ENCODE measurements at regions of chr1 and their contacts with region 1.

Region 1: DNA sequence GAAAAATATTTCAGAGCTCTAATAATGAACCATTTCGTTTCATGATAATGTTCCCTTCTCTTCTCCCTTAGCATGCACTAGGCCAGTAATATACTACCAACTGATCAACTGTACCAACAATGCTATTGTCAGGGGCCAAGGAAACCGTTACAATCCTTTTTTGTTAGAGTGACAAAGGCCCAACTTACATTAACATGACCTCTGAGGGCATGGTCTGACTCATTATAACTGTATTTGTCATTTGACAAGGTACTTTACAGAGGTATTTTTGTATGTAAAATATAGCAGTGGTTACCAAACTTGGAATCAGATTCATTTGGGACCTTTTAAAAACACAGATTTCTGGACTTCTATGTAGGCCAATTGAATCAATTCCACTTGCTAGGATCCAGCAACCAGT is 102.6 kb upstream of the RRP15 start:
- DNase-seq: no peak
- ATAC-seq: no peak
- H3K4me3 ChIP-seq: no peak overlapping the region
- H3K4me3 Mint-ChIP-seq: no peak overlapping the region
- H3K27ac ChIP-seq: no peak overlapping the region
- H3K27ac Mint-ChIP-seq: no peak overlapping the region
- H3K4me1 ChIP-seq: no peaks in the 10 kb centered on the region
- H3K4me1 Mint-ChIP-seq: no peaks in the 10 kb centered on the region
- H3K27me3 ChIP-seq: no peaks in the 10 kb centered on the region
- H3K27me3 Mint-ChIP-seq: peaks cover 0 to 15% of the 10 kb centered on the region in 2 donors

Region 2: DNA sequence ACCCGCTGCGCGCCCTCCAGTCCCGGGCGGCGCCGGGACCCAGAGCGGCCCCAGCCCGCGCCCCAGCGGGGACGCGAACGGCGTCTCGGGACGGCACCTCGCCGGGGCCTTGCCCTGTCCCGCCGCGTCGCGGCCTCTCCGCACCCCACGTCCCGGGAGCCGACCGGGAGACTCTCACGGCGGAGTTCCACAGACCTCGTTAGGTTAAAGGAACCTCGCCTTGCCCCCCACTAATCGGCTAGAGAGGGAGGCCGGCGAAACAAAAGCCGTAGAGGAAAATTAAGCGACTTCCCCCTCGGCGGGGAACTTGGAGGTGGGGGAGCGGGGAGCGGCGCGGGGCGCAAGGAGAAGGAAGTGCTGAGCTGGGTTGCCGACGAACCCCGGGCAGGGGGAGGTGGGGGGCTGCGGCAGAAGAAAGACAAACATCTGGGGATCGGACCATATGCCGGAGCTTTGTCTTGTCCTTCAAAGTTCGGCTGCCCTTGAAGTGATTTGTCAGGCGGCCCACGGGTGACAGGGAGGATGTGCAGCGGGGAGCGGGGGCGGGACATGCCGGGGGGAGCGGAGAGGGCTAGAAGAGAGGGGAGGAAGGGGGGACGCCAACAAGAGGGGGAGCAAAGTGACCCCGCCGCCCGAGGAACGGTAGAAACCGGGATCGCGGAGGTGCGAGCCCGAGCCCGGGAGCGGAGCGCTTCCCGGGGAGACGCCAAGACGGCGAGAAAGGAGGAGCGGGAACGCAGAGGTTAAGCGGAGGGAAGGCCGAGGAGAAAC is 17.3 kb before region 1 on chr1:
- CTCF ChIA-PET with region 1: interaction called in 1 of 2 experiments, 13 read pairs
- POLR2A ChIA-PET with region 1: no interaction called
- DNase-seq: peak in 1 of 35 experiments; percentile 1
- ATAC-seq: peak in 2 of 4 experiments; percentile 35 to 36
- H3K4me3 ChIP-seq: peak overlapping the region; percentile 24 to 69
- H3K4me3 Mint-ChIP-seq: peak overlapping the region; percentile 57 to 87 (median 63)
- H3K27ac ChIP-seq: no peak overlapping the region
- H3K27ac Mint-ChIP-seq: no peak overlapping the region
- H3K4me1 ChIP-seq: peaks cover 2 to 18% of the 10 kb centered on the region in 2 experiments
- H3K4me1 Mint-ChIP-seq: peaks cover 15 to 22% (median 19%) of the 10 kb centered on the region in 3 donors
- H3K27me3 ChIP-seq: peaks cover 21 to 22% of the 10 kb centered on the region in 2 experiments
- H3K27me3 Mint-ChIP-seq: peaks cover 32 to 51% of the 10 kb centered on the region in 2 donors

Measured in T-cell (primary cell).